ENCODE measurements at regions of chr14 and their contacts with region 1.

Region 1: DNA sequence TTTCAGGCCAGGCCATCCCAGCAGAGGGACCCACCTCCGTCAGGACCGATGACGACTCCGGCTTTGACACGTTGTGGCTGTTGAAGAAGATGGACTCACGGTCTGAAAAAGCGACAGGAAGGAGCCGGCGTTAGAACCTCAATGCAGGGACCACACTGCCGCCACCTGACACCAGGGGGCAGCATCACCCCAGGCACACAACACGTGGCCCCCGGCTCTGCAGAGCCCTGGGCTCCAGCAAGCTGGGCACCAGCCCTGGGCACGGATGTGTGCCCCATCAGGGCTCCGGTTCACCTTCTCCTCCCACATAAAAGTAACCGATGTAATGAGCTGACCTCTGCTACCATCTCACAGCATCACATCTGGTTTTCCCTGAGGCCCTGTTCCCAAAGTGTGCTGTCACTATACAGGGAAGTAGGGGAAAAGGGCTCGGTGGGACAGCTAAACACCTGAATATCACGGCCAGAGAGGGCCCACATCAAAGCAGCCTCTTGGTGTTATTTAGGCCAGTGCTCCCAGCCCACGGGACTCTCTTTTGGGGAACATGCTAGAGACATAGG is 29.0 kb downstream of the CHGA start:
- DNase-seq: peak; percentile 69 to 77 (median 74)
- ATAC-seq: peak; percentile 98
- H3K4me3 ChIP-seq: no peak overlapping the region
- H3K27ac ChIP-seq: no peak overlapping the region
- H3K4me1 ChIP-seq: peaks cover 0 to 5% of the 10 kb centered on the region in 2 experiments; a peak in 2 of 5 replicates
- H3K27me3 ChIP-seq: no peaks in the 10 kb centered on the region
- CTCF ChIP-seq: peak; percentile 79 to 81 (median 79)
- EP300 ChIP-seq: no peak
- POLR2A ChIP-seq: no peak
- RAD21 ChIP-seq: peak; percentile 79 to 86

Region 2: GRCh38 chr14:92937051-92937937 is 14.7 kb before region 1 on chr14:
- CTCF ChIA-PET with region 1: no interaction called
- POLR2A ChIA-PET with region 1: no interaction called
- in situ Hi-C with region 1: no loop called
- intact Hi-C with region 1: no loop called
- DNase-seq: peak in 1 of 4 experiments; percentile 18
- ATAC-seq: peak; percentile 48
- H3K4me3 ChIP-seq: no peak overlapping the region
- H3K27ac ChIP-seq: no peak overlapping the region
- H3K4me1 ChIP-seq: peaks cover 0 to 7% of the 10 kb centered on the region in 2 experiments; a peak in 2 of 5 replicates
- H3K27me3 ChIP-seq: no peaks in the 10 kb centered on the region
- CTCF ChIP-seq: no peak
- EP300 ChIP-seq: no peak
- POLR2A ChIP-seq: no peak
- RAD21 ChIP-seq: no peak

Region 3: GRCh38 chr14:93137864-93138263 is 185.9 kb after region 1 on chr14:
- CTCF ChIA-PET with region 1: interaction called, 18 read pairs
- POLR2A ChIA-PET with region 1: no interaction called
- in situ Hi-C with region 1: loop called (anchors 10 kb)
- intact Hi-C with region 1: loop called (anchors 1 kb)
- DNase-seq: peak; percentile 38 to 66 (median 46)
- ATAC-seq: peak; percentile 94
- H3K4me3 ChIP-seq: no peak overlapping the region
- H3K27ac ChIP-seq: no peak overlapping the region
- H3K4me1 ChIP-seq: peaks cover 3 to 7% of the 10 kb centered on the region in 2 experiments; a peak in 3 of 5 replicates
- H3K27me3 ChIP-seq: peaks cover 0 to 1% of the 10 kb centered on the region in 2 experiments; a peak in 1 of 5 replicates
- CTCF ChIP-seq: peak; percentile 22 to 50 (median 40); a peak in 4 of 6 replicates
- EP300 ChIP-seq: no peak
- POLR2A ChIP-seq: no peak
- RAD21 ChIP-seq: peak in 1 of 2 experiments; percentile 52; a peak in 2 of 4 replicates

Region 4: GRCh38 chr14:93146119-93146518 is 194.1 kb after region 1 on chr14:
- CTCF ChIA-PET with region 1: no interaction called
- POLR2A ChIA-PET with region 1: no interaction called
- in situ Hi-C with region 1: loop called (anchors 10 kb)
- intact Hi-C with region 1: no loop called
- DNase-seq: no peak
- ATAC-seq: no peak; the same call in 2 of the 3 replicates
- H3K4me3 ChIP-seq: no peak overlapping the region
- H3K27ac ChIP-seq: no peak overlapping the region
- H3K4me1 ChIP-seq: no peaks in the 10 kb centered on the region; a peak in 1 of 5 replicates
- H3K27me3 ChIP-seq: peaks cover 3 to 18% of the 10 kb centered on the region in 2 experiments; a peak in 2 of 5 replicates
- CTCF ChIP-seq: no peak
- EP300 ChIP-seq: no peak
- POLR2A ChIP-seq: no peak
- RAD21 ChIP-seq: no peak

Measured in K562 (cell line).